H1 (cell line): ENCODE measurements at regions of chr19 and their contacts with region 1.

Region 1: GRCh38 chr19:19361075-19361594 is 40.5 kb downstream of the MAU2 start:
- DNase-seq: peak; percentile 71 to 90
- H3K4me3 ChIP-seq: no peak overlapping the region
- H3K27ac ChIP-seq: no peak overlapping the region
- H3K4me1 ChIP-seq: no peaks in the 10 kb centered on the region; a peak in 2 of 7 replicates
- H3K27me3 ChIP-seq: 0 out of 7 replicates have a peak, but pooled peaks cover 0 to 4% (median 0%) of the 10 kb centered on the region in 4 experiments
- CTCF ChIP-seq: peak; percentile 74 to 87 (median 79)
- EP300 ChIP-seq: no peak
- POLR2A ChIP-seq: no peak
- RAD21 ChIP-seq: peak; percentile 46 to 53

Region 2: GRCh38 chr19:19081642-19082151 is 279.4 kb before region 1 on chr19:
- CTCF ChIA-PET with region 1: no interaction called
- POLR2A ChIA-PET with region 1: no interaction called
- DNase-seq: no peak
- H3K4me3 ChIP-seq: no peak overlapping the region
- H3K27ac ChIP-seq: no peak overlapping the region
- H3K4me1 ChIP-seq: no peaks in the 10 kb centered on the region
- H3K27me3 ChIP-seq: peaks cover 0 to 17% (median 7%) of the 10 kb centered on the region in 4 experiments; a peak in 6 of 7 replicates
- CTCF ChIP-seq: no peak
- EP300 ChIP-seq: no peak
- POLR2A ChIP-seq: no peak
- RAD21 ChIP-seq: no peak

Region 3: GRCh38 chr19:19342756-19343322 is 18.3 kb before region 1 on chr19:
- CTCF ChIA-PET with region 1: interaction called, 10 read pairs
- POLR2A ChIA-PET with region 1: interaction called, 6 read pairs
- DNase-seq: peak; percentile 71 to 95
- H3K4me3 ChIP-seq: no peak overlapping the region
- H3K27ac ChIP-seq: no peak overlapping the region
- H3K4me1 ChIP-seq: no peaks in the 10 kb centered on the region; a peak in 1 of 7 replicates
- H3K27me3 ChIP-seq: no peaks in the 10 kb centered on the region
- CTCF ChIP-seq: peak; percentile 91 to 99 (median 99)
- EP300 ChIP-seq: no peak
- POLR2A ChIP-seq: no peak
- RAD21 ChIP-seq: peak; percentile 75 to 78

Region 4: GRCh38 chr19:19372656-19373416 is 11.7 kb after region 1 on chr19:
- CTCF ChIA-PET with region 1: interaction called, 17 read pairs
- POLR2A ChIA-PET with region 1: interaction called, 3 read pairs
- DNase-seq: no peak
- H3K4me3 ChIP-seq: no peak overlapping the region
- H3K27ac ChIP-seq: no peak overlapping the region
- H3K4me1 ChIP-seq: peaks cover 0 to 4% (median 4%) of the 10 kb centered on the region in 4 experiments; a peak in 5 of 7 replicates
- H3K27me3 ChIP-seq: no peaks in the 10 kb centered on the region
- CTCF ChIP-seq: no peak
- EP300 ChIP-seq: no peak
- POLR2A ChIP-seq: no peak
- RAD21 ChIP-seq: no peak

Region 5: GRCh38 chr19:19399733-19400433 is 38.7 kb after region 1 on chr19:
- CTCF ChIA-PET with region 1: interaction called, 14 read pairs
- POLR2A ChIA-PET with region 1: interaction called, 13 read pairs
- DNase-seq: no peak
- H3K4me3 ChIP-seq: no peak overlapping the region
- H3K27ac ChIP-seq: no peak overlapping the region
- H3K4me1 ChIP-seq: peaks cover 0 to 2% (median 0%) of the 10 kb centered on the region in 4 experiments; a peak in 3 of 7 replicates
- H3K27me3 ChIP-seq: no peaks in the 10 kb centered on the region
- CTCF ChIP-seq: no peak
- EP300 ChIP-seq: no peak
- POLR2A ChIP-seq: no peak
- RAD21 ChIP-seq: no peak

Region 6: GRCh38 chr19:19404879-19405860 is 44.0 kb after region 1 on chr19 and contains the start of gene GATAD2A:
- CTCF ChIA-PET with region 1: interaction called, 8 read pairs
- POLR2A ChIA-PET with region 1: interaction called, 13 read pairs
- DNase-seq: peak; percentile 66 to 98
- H3K4me3 ChIP-seq: peak within 1 kb of the TSS; percentile 55 to 95 (median 81)
- H3K27ac ChIP-seq: peak within 1 kb of the TSS; percentile 73; the same call in 1 of the 2 replicates
- H3K4me1 ChIP-seq: peaks cover 6 to 23% (median 20%) of the 10 kb centered on the region in 4 experiments; a peak in 6 of 7 replicates
- H3K27me3 ChIP-seq: no peaks in the 10 kb centered on the region
- CTCF ChIP-seq: no peak
- EP300 ChIP-seq: no peak
- POLR2A ChIP-seq: peak; percentile 37 to 75
- RAD21 ChIP-seq: no peak; a peak in 1 of 4 replicates
- total RNA-seq, gene GATAD2A: 205 and 210 TPM in 2 replicates

Region 7: DNA sequence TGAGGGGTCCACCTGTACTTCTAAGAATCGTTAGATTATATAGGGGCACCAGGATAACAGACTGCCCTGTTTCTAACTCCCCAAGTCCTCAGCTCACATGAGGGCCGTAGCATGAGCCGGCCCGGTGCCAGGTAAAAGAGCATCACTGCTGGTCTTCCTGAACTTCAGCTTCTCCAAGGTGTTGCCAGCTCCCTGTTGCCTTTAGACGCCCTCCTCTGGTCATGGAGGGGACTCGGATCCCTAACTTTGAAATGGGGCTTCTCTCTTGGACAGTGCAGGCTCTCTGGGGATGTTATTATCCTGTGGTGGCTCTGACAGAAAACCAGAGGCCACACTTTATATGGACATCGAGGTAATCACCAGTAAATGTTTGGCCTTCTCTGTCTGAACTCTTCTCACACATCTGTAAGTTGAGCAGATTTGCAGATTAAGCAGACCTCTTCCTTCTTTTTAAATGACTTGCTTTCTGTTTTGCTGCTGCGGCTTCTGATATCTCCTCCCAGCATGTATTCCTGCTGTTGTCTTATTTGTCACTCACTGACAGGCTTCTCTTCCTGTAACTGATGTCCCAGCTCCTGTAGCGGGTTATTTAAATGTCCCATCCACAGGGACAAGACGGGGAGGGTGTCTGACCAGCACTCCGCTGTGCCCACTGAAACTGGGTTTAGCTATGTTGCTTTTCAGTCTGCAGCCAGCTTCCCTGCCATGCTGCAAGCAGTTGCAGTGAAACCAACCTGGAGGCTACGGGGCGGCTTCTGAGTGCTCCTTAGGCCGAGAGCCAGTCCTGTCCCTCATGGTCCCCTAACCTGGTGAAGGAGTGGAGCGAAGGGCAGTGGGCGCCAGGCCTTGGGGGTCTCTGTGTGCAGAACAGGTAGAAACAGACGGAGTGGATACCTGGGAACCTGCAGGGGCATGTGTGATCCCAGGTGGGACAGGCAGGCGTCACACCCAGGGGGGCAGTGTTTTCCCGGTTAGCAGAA is 115.0 kb after region 1 on chr19:
- CTCF ChIA-PET with region 1: interaction called, 16 read pairs
- POLR2A ChIA-PET with region 1: interaction called, 6 read pairs
- DNase-seq: no peak
- H3K4me3 ChIP-seq: peak overlapping the region in 1 of 4 experiments; percentile 42; a peak in 3 of 8 replicates
- H3K27ac ChIP-seq: no peak overlapping the region
- H3K4me1 ChIP-seq: peaks cover 12 to 21% (median 17%) of the 10 kb centered on the region in 4 experiments
- H3K27me3 ChIP-seq: no peaks in the 10 kb centered on the region
- CTCF ChIP-seq: peak; percentile 59 to 70 (median 60)
- EP300 ChIP-seq: no peak
- POLR2A ChIP-seq: no peak
- RAD21 ChIP-seq: peak; percentile 68 to 77

Region 8: DNA sequence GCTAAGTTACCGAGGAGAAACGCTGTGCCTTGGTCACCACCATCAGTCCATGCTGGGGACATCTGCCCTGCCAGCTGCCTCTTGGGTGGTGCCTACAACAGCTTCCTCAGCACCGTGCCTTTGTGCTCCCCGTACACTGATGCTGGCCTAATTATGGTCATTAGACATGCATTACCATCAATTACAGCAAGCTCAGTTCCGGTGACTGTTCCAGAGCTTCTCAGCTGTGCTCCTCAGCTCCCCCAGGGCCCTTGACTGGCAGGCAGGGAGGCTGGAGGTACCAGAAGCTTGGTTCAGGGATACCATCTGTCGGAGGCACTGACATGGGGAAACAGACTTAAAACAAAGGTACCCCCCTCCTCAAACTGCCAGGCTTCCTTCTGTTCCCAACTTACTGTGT is 217.1 kb after region 1 on chr19:
- CTCF ChIA-PET with region 1: no interaction called
- POLR2A ChIA-PET with region 1: no interaction called
- DNase-seq: no peak
- H3K4me3 ChIP-seq: no peak overlapping the region
- H3K27ac ChIP-seq: no peak overlapping the region
- H3K4me1 ChIP-seq: peaks cover 0 to 5% (median 2%) of the 10 kb centered on the region in 4 experiments; a peak in 5 of 7 replicates
- H3K27me3 ChIP-seq: no peaks in the 10 kb centered on the region; a peak in 1 of 7 replicates
- CTCF ChIP-seq: no peak
- EP300 ChIP-seq: no peak
- POLR2A ChIP-seq: no peak
- RAD21 ChIP-seq: no peak